CD8-positive, alpha-beta T cell (primary cell): ENCODE measurements at regions of chr6 and their contacts with region 1.

Region 1: GRCh38 chr6:4956625-4957024 is 47.2 kb downstream of the RPP40 start:
- DNase-seq: no peak
- ATAC-seq: no peak
- H3K4me3 ChIP-seq: no peak overlapping the region
- H3K4me3 Mint-ChIP-seq: no peak overlapping the region
- H3K27ac ChIP-seq: no peak overlapping the region
- H3K27ac Mint-ChIP-seq: no peak overlapping the region
- H3K4me1 ChIP-seq: no peaks in the 10 kb centered on the region
- H3K4me1 Mint-ChIP-seq: no peaks in the 10 kb centered on the region
- H3K27me3 ChIP-seq: no peaks in the 10 kb centered on the region
- H3K27me3 Mint-ChIP-seq: no peaks in the 10 kb centered on the region
- CTCF ChIP-seq: no peak

Region 2: DNA sequence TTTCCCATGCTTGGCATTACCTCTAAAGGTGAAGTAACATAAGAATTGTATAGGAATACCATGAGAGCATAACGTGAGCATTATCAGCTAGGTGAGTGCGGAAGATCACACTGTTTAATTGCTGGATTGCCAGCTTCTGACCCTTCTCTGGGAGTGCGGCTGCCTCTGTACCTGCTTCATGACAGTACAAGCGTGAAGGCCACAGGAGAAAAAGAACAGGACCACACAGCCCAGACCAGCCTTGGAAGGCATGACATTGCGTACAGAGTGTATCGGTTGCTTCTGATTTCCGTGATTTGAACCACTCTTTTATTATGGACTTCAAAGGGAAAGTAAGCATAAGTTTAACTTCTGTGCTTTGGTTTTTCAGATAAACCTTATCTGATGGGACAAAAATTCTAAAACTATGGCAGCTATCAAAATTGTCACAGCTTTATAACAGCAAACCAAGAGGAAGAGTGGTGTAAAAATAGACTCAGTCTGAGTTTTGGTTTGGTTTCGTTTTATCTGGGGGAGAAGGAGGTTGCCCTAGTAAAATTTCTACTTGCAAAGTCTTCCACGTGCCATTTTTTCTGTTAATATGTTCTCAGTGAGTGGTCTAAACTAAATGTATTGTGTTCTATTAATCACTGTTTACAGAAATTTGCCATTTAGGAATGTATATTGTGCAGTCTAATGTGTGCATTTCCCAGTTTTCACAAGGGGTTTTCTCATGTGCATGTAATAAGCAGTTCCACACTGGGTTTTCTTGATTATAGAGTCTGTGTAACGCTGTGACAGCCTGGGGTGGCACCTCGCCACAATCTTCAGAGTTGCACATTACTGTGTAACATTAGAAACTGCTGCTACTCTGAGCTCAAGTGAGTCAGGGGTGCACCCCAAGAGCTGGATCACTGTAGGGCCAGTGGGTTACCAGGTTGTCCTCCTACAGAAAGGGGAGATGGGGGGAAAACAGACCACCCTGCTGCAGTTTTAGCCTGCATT is 50.0 kb before region 1 on chr6:
- CTCF ChIA-PET with region 1: no interaction called
- POLR2A ChIA-PET with region 1: no interaction called
- intact Hi-C with region 1: loop called in 1 of 2 experiments (anchors 1 kb)
- DNase-seq: peak in 1 of 9 experiments; percentile 32
- ATAC-seq: peak; percentile 62
- H3K4me3 ChIP-seq: peak overlapping the region; percentile 17 to 22
- H3K4me3 Mint-ChIP-seq: peak overlapping the region; percentile 77
- H3K27ac ChIP-seq: peak overlapping the region in 1 of 2 experiments; percentile 67
- H3K27ac Mint-ChIP-seq: peak overlapping the region; percentile 83
- H3K4me1 ChIP-seq: peaks cover 29% of the 10 kb centered on the region
- H3K4me1 Mint-ChIP-seq: peaks cover 55% of the 10 kb centered on the region
- H3K27me3 ChIP-seq: no peaks in the 10 kb centered on the region
- H3K27me3 Mint-ChIP-seq: no peaks in the 10 kb centered on the region
- CTCF ChIP-seq: no peak

Region 3: GRCh38 chr6:4928426-4928825 is 28.2 kb before region 1 on chr6:
- CTCF ChIA-PET with region 1: no interaction called
- POLR2A ChIA-PET with region 1: no interaction called
- intact Hi-C with region 1: loop called in 1 of 2 experiments (anchors 1 kb)
- DNase-seq: no peak
- ATAC-seq: no peak
- H3K4me3 ChIP-seq: no peak overlapping the region
- H3K4me3 Mint-ChIP-seq: no peak overlapping the region
- H3K27ac ChIP-seq: no peak overlapping the region
- H3K27ac Mint-ChIP-seq: no peak overlapping the region
- H3K4me1 ChIP-seq: no peaks in the 10 kb centered on the region
- H3K4me1 Mint-ChIP-seq: peaks cover 60% of the 10 kb centered on the region
- H3K27me3 ChIP-seq: no peaks in the 10 kb centered on the region
- H3K27me3 Mint-ChIP-seq: no peaks in the 10 kb centered on the region
- CTCF ChIP-seq: no peak

Region 4: GRCh38 chr6:4987432-4987831 is 30.8 kb after region 1 on chr6:
- CTCF ChIA-PET with region 1: no interaction called
- POLR2A ChIA-PET with region 1: no interaction called
- intact Hi-C with region 1: no loop called
- DNase-seq: no peak
- ATAC-seq: no peak
- H3K4me3 ChIP-seq: no peak overlapping the region
- H3K4me3 Mint-ChIP-seq: no peak overlapping the region
- H3K27ac ChIP-seq: no peak overlapping the region
- H3K27ac Mint-ChIP-seq: no peak overlapping the region
- H3K4me1 ChIP-seq: no peaks in the 10 kb centered on the region
- H3K4me1 Mint-ChIP-seq: no peaks in the 10 kb centered on the region
- H3K27me3 ChIP-seq: no peaks in the 10 kb centered on the region
- H3K27me3 Mint-ChIP-seq: no peaks in the 10 kb centered on the region
- CTCF ChIP-seq: no peak